ENCODE measurements at regions of chr22 and their contacts with region 1.

Region 1: GRCh38 chr22:19201869-19202798 is 23.6 kb upstream of the SLC25A1 start:
- DNase-seq: no peak
- ATAC-seq: no peak
- H3K4me3 ChIP-seq: no peak overlapping the region
- H3K27ac ChIP-seq: no peak overlapping the region
- H3K4me1 ChIP-seq: no peaks in the 10 kb centered on the region
- H3K27me3 ChIP-seq: no peaks in the 10 kb centered on the region
- CTCF ChIP-seq: no peak
- EP300 ChIP-seq: no peak
- POLR2A ChIP-seq: no peak
- RAD21 ChIP-seq: no peak

Region 2: DNA sequence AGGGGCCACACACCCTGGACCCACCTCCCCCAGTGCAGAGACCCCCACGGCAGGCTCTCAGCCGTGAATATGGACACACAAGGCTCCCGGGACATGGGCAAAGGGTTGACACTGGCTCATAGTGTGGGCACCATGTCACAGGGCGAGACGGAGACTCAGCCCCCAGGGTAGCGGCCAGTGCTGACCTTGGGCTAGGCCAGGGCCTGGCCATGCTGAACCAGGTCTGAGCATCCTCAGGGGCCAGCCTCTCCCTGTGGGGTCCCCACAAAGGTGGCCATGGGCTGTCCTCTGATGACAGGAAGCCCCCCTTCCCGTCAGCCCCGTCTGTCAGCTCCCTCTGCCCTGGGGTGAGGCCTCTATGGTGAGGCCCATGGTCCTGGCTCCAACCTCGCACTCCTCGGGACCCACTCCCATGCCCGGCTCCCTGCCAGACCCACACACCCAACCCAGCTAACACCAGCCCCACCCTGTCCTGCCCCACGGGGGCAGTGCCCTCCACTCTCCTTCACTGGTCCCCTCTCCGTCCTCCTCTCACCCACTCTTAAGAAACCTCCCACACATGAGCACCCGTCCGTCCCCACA is 247.1 kb before region 1 on chr22:
- CTCF ChIA-PET with region 1: no interaction called
- POLR2A ChIA-PET with region 1: no interaction called
- in situ Hi-C with region 1: no loop called
- intact Hi-C with region 1: no loop called
- DNase-seq: no peak
- ATAC-seq: no peak; the same call in 2 of the 3 replicates
- H3K4me3 ChIP-seq: no peak overlapping the region
- H3K27ac ChIP-seq: no peak overlapping the region
- H3K4me1 ChIP-seq: no peaks in the 10 kb centered on the region
- H3K27me3 ChIP-seq: peaks cover 3 to 9% of the 10 kb centered on the region in 2 experiments; a peak in 3 of 5 replicates
- CTCF ChIP-seq: no peak
- EP300 ChIP-seq: no peak
- POLR2A ChIP-seq: no peak
- RAD21 ChIP-seq: no peak

Region 3: DNA sequence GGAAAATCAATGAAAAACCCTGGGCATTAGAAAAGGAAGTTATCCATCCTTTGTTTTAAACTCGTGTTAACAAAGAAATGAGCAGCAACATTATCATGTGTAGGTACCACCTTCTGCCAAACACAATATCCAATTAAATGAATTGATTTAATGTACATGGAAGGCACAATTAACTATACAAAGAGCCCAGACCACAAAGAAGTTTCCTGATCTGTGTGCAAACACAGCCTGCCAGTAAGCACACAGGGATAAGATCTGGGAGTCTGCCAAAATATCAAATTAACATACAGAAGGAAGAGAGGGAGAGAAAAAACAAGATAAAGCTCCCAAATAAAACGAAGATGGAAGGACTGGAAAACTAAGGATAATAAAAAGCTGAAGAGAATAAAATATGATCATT is 30.5 kb after region 1 on chr22:
- CTCF ChIA-PET with region 1: no interaction called
- POLR2A ChIA-PET with region 1: no interaction called
- in situ Hi-C with region 1: no loop called
- intact Hi-C with region 1: no loop called
- DNase-seq: no peak
- ATAC-seq: no peak
- H3K4me3 ChIP-seq: no peak overlapping the region
- H3K27ac ChIP-seq: no peak overlapping the region
- H3K4me1 ChIP-seq: no peaks in the 10 kb centered on the region
- H3K27me3 ChIP-seq: no peaks in the 10 kb centered on the region
- CTCF ChIP-seq: no peak
- EP300 ChIP-seq: no peak
- POLR2A ChIP-seq: no peak
- RAD21 ChIP-seq: no peak

Region 4: DNA sequence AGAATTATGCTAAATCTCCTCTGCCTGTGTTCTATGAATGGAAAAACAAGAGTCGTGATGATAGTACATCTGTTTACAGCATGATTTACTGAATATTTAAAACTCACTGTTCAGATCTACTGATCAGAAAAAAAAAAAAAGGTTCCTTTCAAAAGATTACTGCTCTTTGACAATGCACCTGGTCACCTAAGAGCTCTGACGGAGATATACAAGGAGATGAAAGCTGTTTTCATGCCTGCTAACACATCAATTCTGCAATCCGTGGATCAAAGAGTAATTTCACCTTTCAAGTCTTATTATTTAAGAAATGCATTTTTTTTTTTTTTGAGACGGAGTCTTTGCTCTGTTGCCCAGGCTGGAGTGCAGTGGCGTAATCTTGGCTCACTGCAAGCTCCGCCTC is 58.7 kb after region 1 on chr22:
- CTCF ChIA-PET with region 1: no interaction called
- POLR2A ChIA-PET with region 1: no interaction called
- in situ Hi-C with region 1: loop called (anchors 10 kb)
- intact Hi-C with region 1: no loop called
- DNase-seq: no peak
- ATAC-seq: no peak
- H3K4me3 ChIP-seq: no peak overlapping the region
- H3K27ac ChIP-seq: no peak overlapping the region
- H3K4me1 ChIP-seq: no peaks in the 10 kb centered on the region
- H3K27me3 ChIP-seq: no peaks in the 10 kb centered on the region
- CTCF ChIP-seq: no peak
- EP300 ChIP-seq: no peak
- POLR2A ChIP-seq: no peak
- RAD21 ChIP-seq: no peak

Measured in HepG2 (cell line).